ENCODE measurements at regions of chr10 and their contacts with region 1.

Region 1: GRCh38 chr10:18486438-18486837 is 164.9 kb downstream of the NSUN6 start:
- DNase-seq: no peak
- H3K4me3 ChIP-seq: no peak overlapping the region
- H3K27ac ChIP-seq: no peak overlapping the region
- H3K4me1 ChIP-seq: no peaks in the 10 kb centered on the region
- H3K27me3 ChIP-seq: no peaks in the 10 kb centered on the region
- CTCF ChIP-seq: no peak
- POLR2A ChIP-seq: no peak

Region 2: DNA sequence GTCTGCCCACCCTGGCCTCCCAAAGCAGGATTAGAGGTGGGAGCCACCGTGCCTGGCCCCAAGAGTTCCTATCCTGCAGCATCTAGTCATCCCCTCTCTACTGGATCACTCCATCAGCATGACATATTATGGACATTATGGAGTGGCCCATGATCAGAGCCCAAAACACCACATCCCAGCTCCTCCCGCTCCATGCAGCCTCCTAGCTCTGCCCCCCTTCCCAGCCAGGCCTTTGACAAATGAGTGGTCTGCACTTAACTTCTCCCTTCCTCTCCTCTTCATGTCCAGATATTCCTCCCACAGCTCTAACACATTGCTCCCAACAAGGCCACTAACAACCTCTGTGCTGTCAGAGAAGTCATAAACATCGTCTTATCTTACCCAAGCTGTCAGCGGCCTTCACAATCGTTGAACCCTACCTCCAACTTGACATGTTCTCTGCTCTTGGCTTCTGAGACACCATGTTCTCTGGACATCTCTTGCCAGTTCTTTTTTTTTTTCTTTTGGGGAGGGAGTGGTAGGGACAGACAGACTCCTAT is 22.7 kb before region 1 on chr10:
- intact Hi-C with region 1: loop called (anchors 1 kb)
- DNase-seq: no peak
- H3K4me3 ChIP-seq: no peak overlapping the region
- H3K27ac ChIP-seq: no peak overlapping the region
- H3K4me1 ChIP-seq: no peaks in the 10 kb centered on the region
- H3K27me3 ChIP-seq: no peaks in the 10 kb centered on the region
- CTCF ChIP-seq: no peak
- POLR2A ChIP-seq: no peak

Region 3: DNA sequence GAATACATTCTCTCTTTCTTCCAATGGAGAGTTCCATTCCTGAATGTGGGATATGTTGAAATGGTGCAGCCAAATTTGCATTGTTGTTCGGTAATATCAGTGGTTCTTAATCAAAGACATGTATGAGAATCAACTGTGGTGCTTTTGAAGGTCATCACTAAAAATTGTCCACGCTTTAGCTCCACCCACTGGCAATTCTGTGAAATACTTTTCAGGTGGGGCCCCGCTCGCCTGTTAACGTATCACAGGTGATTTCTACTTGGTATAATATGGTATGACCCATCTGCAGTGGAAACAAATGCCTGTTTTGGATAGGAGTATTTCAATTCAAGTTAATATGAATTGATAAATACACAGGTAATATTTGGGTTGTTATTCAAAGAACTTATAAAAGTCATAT is 13.5 kb before region 1 on chr10:
- intact Hi-C with region 1: loop called (anchors 1 kb)
- DNase-seq: no peak
- H3K4me3 ChIP-seq: no peak overlapping the region
- H3K27ac ChIP-seq: no peak overlapping the region
- H3K4me1 ChIP-seq: no peaks in the 10 kb centered on the region
- H3K27me3 ChIP-seq: no peaks in the 10 kb centered on the region
- CTCF ChIP-seq: no peak
- POLR2A ChIP-seq: no peak

Region 4: GRCh38 chr10:18601321-18601720 is 114.9 kb after region 1 on chr10:
- intact Hi-C with region 1: no loop called
- DNase-seq: no peak
- H3K4me3 ChIP-seq: no peak overlapping the region
- H3K27ac ChIP-seq: no peak overlapping the region
- H3K4me1 ChIP-seq: no peaks in the 10 kb centered on the region
- H3K27me3 ChIP-seq: no peaks in the 10 kb centered on the region
- CTCF ChIP-seq: no peak
- POLR2A ChIP-seq: no peak